ENCODE measurements at regions of chr13 and their contacts with region 1.

Region 1: DNA sequence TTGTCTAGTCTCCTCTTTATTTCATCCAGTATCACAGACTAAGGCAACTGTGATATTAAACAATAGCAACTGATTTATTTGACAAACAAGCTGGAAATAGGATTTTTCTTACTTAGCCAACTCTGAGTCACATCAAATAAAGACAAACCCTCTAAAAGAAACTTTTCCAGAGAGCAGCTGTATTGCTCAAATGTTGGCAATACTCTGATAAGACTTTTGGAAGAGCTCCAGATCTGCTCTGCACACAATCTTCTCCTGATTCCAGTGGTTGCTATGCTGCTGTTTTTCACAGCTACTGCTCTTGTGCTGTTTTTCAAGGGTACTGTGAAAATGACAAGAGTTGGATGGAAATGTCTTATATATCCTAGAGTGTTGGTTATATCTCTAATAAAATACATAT is 1479.2 kb downstream of the SLITRK5 start:
- DNase-seq: no peak
- ATAC-seq: no peak
- H3K4me3 ChIP-seq: no peak overlapping the region
- H3K27ac ChIP-seq: no peak overlapping the region
- H3K4me1 ChIP-seq: no peaks in the 10 kb centered on the region
- H3K27me3 ChIP-seq: no peaks in the 10 kb centered on the region
- CTCF ChIP-seq: no peak

Region 2: DNA sequence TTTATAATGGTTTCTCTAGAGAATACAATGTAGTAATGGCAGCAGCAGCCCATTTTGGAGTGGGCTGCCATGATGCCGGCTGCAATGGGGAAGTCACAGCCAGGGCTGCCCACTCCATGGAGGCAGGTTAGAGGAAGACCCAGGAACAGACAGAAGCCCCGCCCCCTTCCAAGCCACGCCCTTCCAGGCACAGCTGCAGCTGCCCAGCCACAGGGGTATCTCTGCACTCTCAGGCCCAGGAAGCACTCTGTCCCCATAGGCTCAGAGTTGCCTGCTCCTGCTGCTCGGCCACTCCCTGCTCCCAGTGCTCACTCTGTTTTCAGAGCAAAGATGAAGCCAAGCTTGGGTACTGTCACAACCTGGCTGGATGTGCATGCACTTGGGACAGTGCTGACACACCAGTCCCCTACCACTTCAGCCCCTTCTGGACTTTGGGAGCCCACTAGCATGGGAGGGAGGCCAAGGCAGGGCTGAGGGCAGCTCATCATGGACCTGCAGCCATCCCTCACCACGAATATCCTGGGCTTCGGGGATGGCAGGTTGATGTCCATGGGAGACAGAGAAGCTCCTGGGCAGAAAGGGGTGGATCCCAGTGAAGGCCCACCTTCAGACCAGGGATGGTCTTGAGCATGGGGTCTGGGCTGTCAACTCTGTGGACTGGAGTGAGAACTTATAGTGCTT is 255.0 kb before region 1 on chr13:
- CTCF ChIA-PET with region 1: no interaction called
- POLR2A ChIA-PET with region 1: no interaction called
- in situ Hi-C with region 1: no loop called
- intact Hi-C with region 1: no loop called
- DNase-seq: no peak
- ATAC-seq: no peak
- H3K4me3 ChIP-seq: no peak overlapping the region
- H3K27ac ChIP-seq: no peak overlapping the region
- H3K4me1 ChIP-seq: no peaks in the 10 kb centered on the region
- H3K27me3 ChIP-seq: no peaks in the 10 kb centered on the region
- CTCF ChIP-seq: no peak

Region 3: DNA sequence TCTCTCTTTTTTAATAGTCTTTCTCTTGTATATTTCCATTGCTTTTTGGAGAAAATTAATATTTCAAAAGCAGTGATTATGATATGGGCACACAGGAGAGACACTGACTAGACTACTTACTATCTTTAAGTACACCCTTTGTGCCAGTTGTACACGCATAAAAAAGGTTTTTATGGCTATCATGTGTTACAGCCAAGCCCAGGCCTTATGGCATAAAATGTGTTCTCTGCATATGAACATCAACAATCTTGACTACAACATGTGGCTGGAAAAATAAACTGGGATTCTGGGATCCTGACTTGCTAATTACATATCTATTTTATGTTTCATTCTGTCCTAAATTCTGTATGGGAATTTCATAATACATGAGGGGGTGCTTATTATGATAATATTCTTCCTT is 77.4 kb before region 1 on chr13:
- CTCF ChIA-PET with region 1: no interaction called
- POLR2A ChIA-PET with region 1: no interaction called
- in situ Hi-C with region 1: no loop called
- intact Hi-C with region 1: no loop called
- DNase-seq: no peak
- ATAC-seq: no peak
- H3K4me3 ChIP-seq: no peak overlapping the region
- H3K27ac ChIP-seq: no peak overlapping the region
- H3K4me1 ChIP-seq: no peaks in the 10 kb centered on the region
- H3K27me3 ChIP-seq: no peaks in the 10 kb centered on the region
- CTCF ChIP-seq: no peak

Region 4: DNA sequence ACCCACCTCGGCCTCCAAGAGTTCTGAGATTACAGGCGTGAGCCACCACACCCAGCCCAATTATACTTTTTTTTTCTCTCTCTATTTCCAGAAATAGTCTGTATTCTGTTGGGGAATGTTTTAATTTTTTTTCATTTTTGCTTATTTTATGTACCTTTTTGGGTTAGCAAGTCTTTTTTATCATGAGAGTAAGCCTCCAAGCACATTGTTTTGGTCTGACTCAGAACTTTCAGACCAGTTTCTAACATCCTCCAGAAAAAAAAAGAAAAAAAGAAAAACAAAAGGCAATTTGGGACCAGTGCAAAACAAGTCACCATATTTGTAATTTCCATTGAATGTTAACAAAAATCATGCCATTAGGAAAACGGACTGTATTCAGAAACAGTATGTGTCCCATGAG is 13.7 kb before region 1 on chr13:
- CTCF ChIA-PET with region 1: no interaction called
- POLR2A ChIA-PET with region 1: no interaction called
- in situ Hi-C with region 1: no loop called
- intact Hi-C with region 1: loop called (anchors 1 kb)
- DNase-seq: no peak
- ATAC-seq: no peak
- H3K4me3 ChIP-seq: no peak overlapping the region
- H3K27ac ChIP-seq: no peak overlapping the region
- H3K4me1 ChIP-seq: no peaks in the 10 kb centered on the region
- H3K27me3 ChIP-seq: no peaks in the 10 kb centered on the region
- CTCF ChIP-seq: no peak

Region 5: GRCh38 chr13:89255844-89256406 is 105.6 kb after region 1 on chr13:
- CTCF ChIA-PET with region 1: no interaction called
- POLR2A ChIA-PET with region 1: no interaction called
- in situ Hi-C with region 1: no loop called
- intact Hi-C with region 1: no loop called
- DNase-seq: no peak
- ATAC-seq: no peak
- H3K4me3 ChIP-seq: no peak overlapping the region
- H3K27ac ChIP-seq: no peak overlapping the region
- H3K4me1 ChIP-seq: no peaks in the 10 kb centered on the region
- H3K27me3 ChIP-seq: no peaks in the 10 kb centered on the region
- CTCF ChIP-seq: no peak

Region 6: DNA sequence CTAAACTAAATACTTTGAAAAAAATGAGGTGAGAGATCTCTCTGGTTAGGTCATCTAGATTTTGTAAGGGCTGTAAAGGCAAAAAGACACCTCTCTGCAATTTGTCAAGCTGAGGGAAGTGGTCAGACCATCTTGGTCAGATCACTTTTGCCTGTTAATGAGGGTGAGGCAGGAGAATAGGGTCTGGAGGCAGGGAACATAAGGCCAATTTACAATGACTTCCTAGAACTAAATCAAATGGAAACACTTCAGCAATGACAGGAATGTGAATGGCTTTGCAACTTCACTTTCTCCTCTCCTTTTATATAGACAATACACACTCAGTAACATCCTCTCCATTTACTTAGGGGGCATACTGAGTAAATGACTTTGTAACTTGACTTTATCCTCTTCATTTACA is 174.2 kb after region 1 on chr13:
- CTCF ChIA-PET with region 1: no interaction called
- POLR2A ChIA-PET with region 1: no interaction called
- in situ Hi-C with region 1: no loop called
- intact Hi-C with region 1: no loop called
- DNase-seq: no peak
- ATAC-seq: no peak
- H3K4me3 ChIP-seq: no peak overlapping the region
- H3K27ac ChIP-seq: no peak overlapping the region
- H3K4me1 ChIP-seq: no peaks in the 10 kb centered on the region
- H3K27me3 ChIP-seq: no peaks in the 10 kb centered on the region
- CTCF ChIP-seq: no peak